Transverse colon (tissue), 4 donors: ENCODE measurements at regions of chr10 and their contacts with region 1.

Region 1: GRCh38 chr10:1345368-1345767 is 289.2 kb downstream of the WDR37 start:
- DNase-seq: no peak
- H3K4me3 ChIP-seq: no peak overlapping the region
- H3K27ac ChIP-seq: no peak overlapping the region
- H3K4me1 ChIP-seq: no peaks in the 10 kb centered on the region
- H3K27me3 ChIP-seq: no peaks in the 10 kb centered on the region
- CTCF ChIP-seq: no peak
- EP300 ChIP-seq: no peak
- POLR2A ChIP-seq: no peak

Region 2: DNA sequence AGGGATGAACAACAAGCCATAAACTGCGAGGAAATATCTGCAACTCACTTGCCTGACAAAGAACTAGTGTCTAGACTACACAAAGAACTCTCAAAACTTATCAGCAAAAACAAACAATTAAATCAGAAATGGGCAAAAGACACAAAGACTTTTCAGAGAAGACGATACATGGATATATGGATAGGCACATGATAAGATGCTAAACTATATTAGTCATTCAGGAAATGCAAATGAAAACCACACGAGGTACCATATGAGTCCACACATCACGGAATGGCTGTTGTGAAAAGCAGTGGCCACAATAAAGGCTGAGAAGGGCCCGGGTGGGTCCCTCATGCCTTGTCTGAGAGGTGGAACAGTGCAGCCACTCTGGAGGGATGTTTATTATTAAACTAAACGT is 21.4 kb before region 1 on chr10:
- in situ Hi-C with region 1: no loop called
- intact Hi-C with region 1: loop called (anchors 1 kb)
- DNase-seq: no peak
- H3K4me3 ChIP-seq: no peak overlapping the region
- H3K27ac ChIP-seq: no peak overlapping the region
- H3K4me1 ChIP-seq: peaks cover 0 to 7% (median 5%) of the 10 kb centered on the region in 4 donors
- H3K27me3 ChIP-seq: no peaks in the 10 kb centered on the region
- CTCF ChIP-seq: no peak
- EP300 ChIP-seq: no peak
- POLR2A ChIP-seq: no peak